ENCODE measurements at regions of chr17 and their contacts with region 1.

Region 1: GRCh38 chr17:40015005-40015997 is at the start of gene CSF3:
- DNase-seq: peak; percentile 66
- H3K4me3 Mint-ChIP-seq: no peak within 1 kb of the TSS
- H3K27ac Mint-ChIP-seq: no peak within 1 kb of the TSS
- H3K4me1 Mint-ChIP-seq: peaks cover 10% of the 10 kb centered on the region
- H3K27me3 Mint-ChIP-seq: peaks cover 74% of the 10 kb centered on the region
- CTCF ChIP-seq: no peak
- total RNA-seq, gene CSF3: 0.38 TPM in 1 of 2 replicates, not detected in the other

Region 2: DNA sequence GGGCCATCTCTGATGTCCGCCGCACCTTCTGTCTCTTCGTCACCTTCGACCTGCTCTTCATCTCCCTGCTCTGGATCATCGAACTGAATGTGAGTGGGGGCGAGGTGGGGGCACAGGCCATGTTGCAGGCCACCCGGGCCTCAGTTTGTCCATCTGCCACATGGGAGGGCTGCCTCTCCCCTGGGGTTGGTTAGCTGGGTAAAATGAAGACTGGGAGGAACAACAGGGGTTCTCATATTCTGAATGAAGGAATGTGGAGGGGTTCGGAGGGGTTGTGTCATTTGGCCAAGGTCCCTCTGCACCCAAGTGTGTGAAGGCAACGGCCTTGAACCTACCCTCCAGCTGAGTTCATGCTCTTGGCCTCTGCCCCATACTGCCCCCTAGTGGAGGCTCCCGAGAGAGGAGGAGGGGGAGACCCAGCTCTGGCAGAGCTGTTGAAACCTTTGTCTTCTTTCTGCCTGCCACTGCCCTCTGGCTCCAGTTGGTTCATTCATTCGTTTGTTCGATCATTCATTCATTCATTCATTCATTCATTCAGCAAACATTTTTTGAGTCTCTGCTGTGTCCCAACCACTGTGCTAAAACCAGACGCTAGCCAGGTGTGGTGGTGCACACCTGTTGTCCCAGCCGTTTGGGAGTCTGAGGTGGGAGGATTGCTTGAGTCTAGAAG is 361.5 kb before region 1 on chr17:
- CTCF ChIA-PET with region 1: interaction called, 15 read pairs
- intact Hi-C with region 1: no loop called
- DNase-seq: peak; percentile 100
- H3K4me3 Mint-ChIP-seq: no peak overlapping the region
- H3K27ac Mint-ChIP-seq: no peak overlapping the region
- H3K4me1 Mint-ChIP-seq: peaks cover 23% of the 10 kb centered on the region
- H3K27me3 Mint-ChIP-seq: no peaks in the 10 kb centered on the region
- CTCF ChIP-seq: no peak

Region 3: GRCh38 chr17:40062329-40063186 is 47.3 kb after region 1 on chr17 and contains the start of gene THRA:
- CTCF ChIA-PET with region 1: interaction called, 81 read pairs
- intact Hi-C with region 1: loop called (anchors 1 kb)
- DNase-seq: peak; percentile 100
- H3K4me3 Mint-ChIP-seq: peak within 1 kb of the TSS; percentile 54
- H3K27ac Mint-ChIP-seq: peak within 1 kb of the TSS; percentile 27
- H3K4me1 Mint-ChIP-seq: peaks cover 55% of the 10 kb centered on the region
- H3K27me3 Mint-ChIP-seq: peaks cover 52% of the 10 kb centered on the region
- CTCF ChIP-seq: no peak
- total RNA-seq, gene THRA: 107 and 133 TPM in 2 replicates

Region 4: DNA sequence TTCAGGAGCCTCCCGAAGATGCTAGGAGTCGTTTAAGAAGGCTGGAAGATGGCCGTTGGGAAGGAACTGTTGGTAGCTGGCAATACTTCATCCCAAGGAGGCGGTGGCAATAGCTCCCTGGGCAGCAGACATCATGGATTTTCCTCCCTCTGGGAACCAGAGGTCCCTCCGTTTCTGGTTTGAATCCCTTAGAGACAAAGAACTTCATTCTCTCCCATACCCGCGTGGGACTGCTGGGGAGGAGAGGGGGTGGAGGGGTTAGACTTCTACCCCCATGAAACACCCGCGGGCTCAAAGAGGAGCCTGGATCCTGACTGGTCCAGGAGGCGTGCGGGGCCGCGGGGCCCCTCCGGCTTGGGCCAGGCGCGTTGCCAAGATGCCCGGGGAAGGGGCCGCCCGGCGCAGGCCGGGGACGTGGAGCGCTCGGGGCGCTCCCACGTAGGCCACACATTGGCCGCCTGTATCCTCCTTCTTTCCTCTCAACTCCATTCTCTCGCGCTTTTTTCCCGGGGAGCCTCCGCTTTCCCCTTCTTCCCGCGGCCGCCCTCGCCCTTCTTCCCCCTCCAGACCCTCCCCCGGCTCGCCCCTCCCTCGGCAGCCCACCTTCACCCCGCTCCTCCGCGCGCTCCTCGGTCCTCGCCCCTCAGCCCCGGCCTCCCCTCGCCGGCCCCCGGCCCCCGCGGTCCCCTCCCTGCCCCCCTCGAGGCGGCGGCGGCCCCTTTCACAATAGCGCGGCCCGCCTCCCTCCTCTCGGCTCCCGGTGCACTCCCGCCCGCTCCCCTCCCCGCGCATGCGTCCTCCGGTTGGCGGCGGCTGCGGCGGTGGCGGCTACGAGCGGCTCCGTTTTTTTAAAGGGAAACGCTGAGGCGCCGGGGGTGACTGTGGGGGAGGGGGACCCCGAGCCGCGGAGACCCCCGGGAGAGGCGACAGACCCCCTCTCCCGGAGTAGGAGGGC is 106.2 kb after region 1 on chr17 and contains the start of gene MSL1:
- CTCF ChIA-PET with region 1: interaction called, 57 read pairs
- intact Hi-C with region 1: no loop called
- DNase-seq: peak; percentile 100
- H3K4me3 Mint-ChIP-seq: peak within 1 kb of the TSS; percentile 86
- H3K27ac Mint-ChIP-seq: peak within 1 kb of the TSS; percentile 53
- H3K4me1 Mint-ChIP-seq: peaks cover 48% of the 10 kb centered on the region
- H3K27me3 Mint-ChIP-seq: no peaks in the 10 kb centered on the region
- CTCF ChIP-seq: no peak
- total RNA-seq, gene MSL1: 505 and 524 TPM in 2 replicates

Region 5: DNA sequence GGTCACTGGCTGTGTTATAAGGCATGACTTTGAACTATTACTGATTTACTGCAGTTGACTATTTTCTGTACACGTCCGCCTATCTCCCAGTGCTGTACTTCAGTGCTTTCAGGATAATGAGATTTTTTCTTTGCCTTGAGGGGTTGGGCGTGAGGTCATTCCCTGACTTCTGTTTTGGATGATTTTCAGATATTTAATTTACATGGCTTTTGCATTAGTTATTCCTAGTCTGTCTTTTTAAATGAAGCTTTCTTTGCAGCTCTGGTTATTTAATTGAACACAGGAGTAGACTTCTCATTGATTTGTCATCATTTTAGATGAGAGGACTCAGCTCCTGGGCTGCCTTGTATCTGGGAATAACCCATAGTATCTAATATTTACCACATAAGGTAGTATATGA is 227.5 kb after region 1 on chr17:
- CTCF ChIA-PET with region 1: no interaction called
- intact Hi-C with region 1: no loop called
- DNase-seq: no peak
- H3K4me3 Mint-ChIP-seq: no peak overlapping the region
- H3K27ac Mint-ChIP-seq: no peak overlapping the region
- H3K4me1 Mint-ChIP-seq: peaks cover 32% of the 10 kb centered on the region
- H3K27me3 Mint-ChIP-seq: no peaks in the 10 kb centered on the region
- CTCF ChIP-seq: no peak

Region 6: DNA sequence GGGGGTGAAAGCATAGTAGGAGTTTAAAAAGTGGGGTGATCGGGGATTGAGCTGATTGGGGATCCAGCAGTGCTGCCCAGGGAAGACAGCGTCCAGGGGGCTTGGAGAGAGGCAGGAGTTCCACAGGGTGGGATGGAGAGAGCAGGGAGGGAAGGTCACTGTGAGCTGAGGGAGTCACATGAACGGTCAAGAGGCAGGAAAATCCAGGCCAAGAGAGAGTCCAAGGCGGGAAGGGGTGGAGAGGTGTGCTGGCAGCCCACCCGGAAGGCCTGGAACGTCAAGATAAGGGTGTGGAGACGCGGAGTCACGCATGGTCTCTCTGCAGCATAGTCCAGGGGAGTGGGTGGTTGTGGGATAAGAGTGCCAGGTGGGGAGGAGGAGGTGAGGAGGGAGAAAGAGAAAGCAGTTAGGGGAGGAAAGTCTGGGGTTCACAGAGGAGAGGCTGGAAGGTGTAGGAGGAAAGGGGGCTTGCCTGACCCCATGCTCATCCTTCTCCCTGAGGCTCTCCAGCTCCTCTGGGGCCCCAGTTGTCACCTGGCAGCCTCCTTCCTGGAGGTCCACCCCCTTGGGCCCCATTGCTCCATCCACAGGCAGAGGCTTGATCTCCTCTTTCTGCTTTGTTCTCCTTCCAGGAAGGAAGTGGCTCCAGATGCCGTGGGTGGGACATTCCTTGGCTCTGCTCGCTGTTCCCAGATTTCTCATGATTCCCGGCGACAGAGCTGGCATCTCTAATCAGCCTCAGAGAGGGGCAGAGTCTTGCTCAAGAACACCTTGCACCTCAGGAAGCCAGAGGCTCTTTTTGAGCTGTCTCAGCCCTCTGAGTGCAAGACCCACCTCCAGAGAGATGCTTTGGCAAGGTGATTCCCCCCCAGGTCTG is 521.2 kb after region 1 on chr17:
- CTCF ChIA-PET with region 1: interaction called, 17 read pairs
- intact Hi-C with region 1: loop called (anchors 1 kb)
- DNase-seq: peak; percentile 68
- H3K4me3 Mint-ChIP-seq: no peak overlapping the region
- H3K27ac Mint-ChIP-seq: no peak overlapping the region
- H3K4me1 Mint-ChIP-seq: peaks cover 24% of the 10 kb centered on the region
- H3K27me3 Mint-ChIP-seq: peaks cover 85% of the 10 kb centered on the region
- CTCF ChIP-seq: no peak

Region 7: GRCh38 chr17:40615295-40615988 is 600.1 kb after region 1 on chr17:
- CTCF ChIA-PET with region 1: no interaction called
- intact Hi-C with region 1: no loop called
- DNase-seq: peak; percentile 100
- H3K4me3 Mint-ChIP-seq: no peak overlapping the region
- H3K27ac Mint-ChIP-seq: no peak overlapping the region
- H3K4me1 Mint-ChIP-seq: peaks cover 26% of the 10 kb centered on the region
- H3K27me3 Mint-ChIP-seq: peaks cover 97% of the 10 kb centered on the region
- CTCF ChIP-seq: no peak

Measured in Calu3 (cell line).